Activated B cell treated with CpG ODN at 0.5 μM for 24 hours (primary cell): ENCODE measurements at regions of chr18 and their contacts with region 1.

Region 1: GRCh38 chr18:35580701-35581539 is 620 bp upstream of the GALNT1 start:
- DNase-seq: peak; percentile 73
- ATAC-seq: peak; percentile 71
- H3K4me3 Mint-ChIP-seq: peak overlapping the region; percentile 79
- H3K27ac Mint-ChIP-seq: peak overlapping the region; percentile 83
- H3K4me1 Mint-ChIP-seq: peaks cover 42% of the 10 kb centered on the region
- H3K27me3 Mint-ChIP-seq: no peaks in the 10 kb centered on the region
- CTCF ChIP-seq: no peak

Region 2: DNA sequence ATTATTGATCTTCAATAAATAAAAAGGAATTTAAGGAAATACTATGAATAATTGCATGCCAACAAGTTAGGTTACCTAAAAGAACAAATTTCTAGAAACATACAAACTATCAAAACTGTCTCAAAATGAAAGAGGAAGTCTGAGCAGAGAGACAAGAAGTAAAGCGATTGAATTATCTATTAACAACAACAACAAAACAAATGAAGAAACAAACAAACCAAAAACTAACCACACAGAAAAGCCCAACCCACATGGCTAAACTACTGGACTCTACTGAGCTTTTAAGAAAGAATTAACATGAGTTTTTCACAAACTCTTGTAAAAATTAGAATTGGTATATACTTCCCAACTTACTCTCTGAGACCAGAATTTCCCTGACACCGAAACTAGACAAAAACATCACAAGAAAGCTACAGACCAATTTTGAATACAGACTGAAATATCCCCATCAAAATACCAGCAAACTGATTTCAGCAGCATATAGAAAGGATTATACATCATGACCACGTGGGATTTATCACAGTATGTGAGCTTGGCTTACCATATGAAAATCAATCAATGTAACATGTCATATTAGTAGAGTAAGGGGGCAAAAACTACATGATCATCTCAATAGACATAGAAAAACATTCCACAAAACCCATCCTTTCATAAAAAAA is 16.0 kb before region 1 on chr18:
- CTCF ChIA-PET with region 1: no interaction called
- POLR2A ChIA-PET with region 1: no interaction called
- intact Hi-C with region 1: loop called (anchors 1 kb)
- DNase-seq: no peak
- ATAC-seq: peak; percentile 28
- H3K4me3 Mint-ChIP-seq: peak overlapping the region; percentile 55
- H3K27ac Mint-ChIP-seq: peak overlapping the region; percentile 61
- H3K4me1 Mint-ChIP-seq: peaks cover 20% of the 10 kb centered on the region
- H3K27me3 Mint-ChIP-seq: no peaks in the 10 kb centered on the region
- CTCF ChIP-seq: no peak

Region 3: DNA sequence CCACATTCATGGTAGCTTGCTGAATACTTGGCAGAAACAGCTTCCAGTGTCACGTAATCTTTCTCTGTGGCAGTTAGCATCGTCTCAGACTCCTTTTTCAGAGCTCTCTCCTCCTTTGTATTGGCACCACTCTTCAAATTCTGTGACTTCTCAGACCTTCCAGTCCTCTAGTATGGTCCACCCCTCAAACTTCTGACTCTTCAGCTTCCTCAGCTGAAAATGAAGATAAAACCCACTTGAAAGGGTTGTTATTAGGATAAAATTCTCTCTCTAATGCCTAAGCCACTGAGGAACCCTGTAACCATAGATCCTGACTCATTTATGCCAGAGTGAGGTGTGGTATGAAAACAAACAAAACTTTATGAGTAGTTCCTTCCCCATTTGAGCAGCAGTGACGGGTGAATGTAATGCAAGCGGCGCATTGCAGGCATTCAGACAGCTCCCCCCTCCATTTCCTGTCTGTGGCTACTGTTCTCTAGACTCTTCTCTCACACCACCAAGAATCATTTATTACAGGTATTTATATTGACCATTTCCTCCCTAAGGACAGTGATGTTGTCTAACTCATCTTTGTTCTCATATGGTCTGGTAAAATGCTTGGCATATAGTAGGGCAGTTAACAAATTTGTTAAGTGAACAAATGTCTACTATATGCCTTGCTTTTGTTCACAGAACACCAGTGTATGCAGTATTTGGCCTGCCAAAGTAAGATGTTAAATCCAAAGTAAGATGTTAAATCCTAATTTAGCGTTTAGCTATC is 35.9 kb after region 1 on chr18:
- CTCF ChIA-PET with region 1: no interaction called
- POLR2A ChIA-PET with region 1: interaction called, 15 read pairs
- intact Hi-C with region 1: loop called (anchors 1 kb)
- DNase-seq: peak; percentile 24
- ATAC-seq: peak; percentile 93
- H3K4me3 Mint-ChIP-seq: no peak overlapping the region
- H3K27ac Mint-ChIP-seq: no peak overlapping the region
- H3K4me1 Mint-ChIP-seq: peaks cover 12% of the 10 kb centered on the region
- H3K27me3 Mint-ChIP-seq: no peaks in the 10 kb centered on the region
- CTCF ChIP-seq: no peak